Activated CD4-positive, alpha-beta T cell treated with anti-CD3 and anti-CD28 coated beads for 36 hours (primary cell): ENCODE measurements at regions of chr10 and their contacts with region 1.

Region 1: GRCh38 chr10:132363921-132364593 is 32.1 kb downstream of the LRRC27 start:
- DNase-seq: no peak
- ATAC-seq: peak; percentile 43
- H3K4me3 Mint-ChIP-seq: no peak overlapping the region
- H3K27ac Mint-ChIP-seq: no peak overlapping the region
- H3K4me1 Mint-ChIP-seq: no peaks in the 10 kb centered on the region
- H3K27me3 Mint-ChIP-seq: no peaks in the 10 kb centered on the region

Region 2: GRCh38 chr10:132387764-132388210 is 23.7 kb after region 1 on chr10:
- CTCF ChIA-PET with region 1: interaction called, 3 read pairs
- POLR2A ChIA-PET with region 1: no interaction called
- intact Hi-C with region 1: loop called in 1 of 2 experiments (anchors 1 kb)
- DNase-seq: peak; percentile 88
- ATAC-seq: peak; percentile 57
- H3K4me3 Mint-ChIP-seq: peak overlapping the region; percentile 62
- H3K27ac Mint-ChIP-seq: peak overlapping the region; percentile 71
- H3K4me1 Mint-ChIP-seq: peaks cover 3% of the 10 kb centered on the region
- H3K27me3 Mint-ChIP-seq: no peaks in the 10 kb centered on the region

Region 3: GRCh38 chr10:132810807-132811700 is 447.0 kb after region 1 on chr10:
- CTCF ChIA-PET with region 1: no interaction called
- POLR2A ChIA-PET with region 1: no interaction called
- intact Hi-C with region 1: no loop called
- DNase-seq: no peak
- ATAC-seq: no peak
- H3K4me3 Mint-ChIP-seq: no peak overlapping the region
- H3K27ac Mint-ChIP-seq: no peak overlapping the region
- H3K4me1 Mint-ChIP-seq: no peaks in the 10 kb centered on the region
- H3K27me3 Mint-ChIP-seq: peaks cover 7% of the 10 kb centered on the region